Sigmoid colon (tissue), 7 donors: ENCODE measurements at regions of chr10 and their contacts with region 1.

Region 1: GRCh38 chr10:61284222-61284890 is 168.8 kb downstream of the TMEM26 start:
- DNase-seq: no peak
- H3K4me3 ChIP-seq: no peak overlapping the region
- H3K27ac ChIP-seq: peak overlapping the region in 2 of 4 donors; percentile 8 to 26
- H3K4me1 ChIP-seq: peaks cover 0 to 11% (median 3%) of the 10 kb centered on the region in 4 donors
- H3K27me3 ChIP-seq: no peaks in the 10 kb centered on the region
- CTCF ChIP-seq: peak; percentile 49 to 81 (median 65)
- EP300 ChIP-seq: no peak
- POLR2A ChIP-seq: no peak

Region 2: DNA sequence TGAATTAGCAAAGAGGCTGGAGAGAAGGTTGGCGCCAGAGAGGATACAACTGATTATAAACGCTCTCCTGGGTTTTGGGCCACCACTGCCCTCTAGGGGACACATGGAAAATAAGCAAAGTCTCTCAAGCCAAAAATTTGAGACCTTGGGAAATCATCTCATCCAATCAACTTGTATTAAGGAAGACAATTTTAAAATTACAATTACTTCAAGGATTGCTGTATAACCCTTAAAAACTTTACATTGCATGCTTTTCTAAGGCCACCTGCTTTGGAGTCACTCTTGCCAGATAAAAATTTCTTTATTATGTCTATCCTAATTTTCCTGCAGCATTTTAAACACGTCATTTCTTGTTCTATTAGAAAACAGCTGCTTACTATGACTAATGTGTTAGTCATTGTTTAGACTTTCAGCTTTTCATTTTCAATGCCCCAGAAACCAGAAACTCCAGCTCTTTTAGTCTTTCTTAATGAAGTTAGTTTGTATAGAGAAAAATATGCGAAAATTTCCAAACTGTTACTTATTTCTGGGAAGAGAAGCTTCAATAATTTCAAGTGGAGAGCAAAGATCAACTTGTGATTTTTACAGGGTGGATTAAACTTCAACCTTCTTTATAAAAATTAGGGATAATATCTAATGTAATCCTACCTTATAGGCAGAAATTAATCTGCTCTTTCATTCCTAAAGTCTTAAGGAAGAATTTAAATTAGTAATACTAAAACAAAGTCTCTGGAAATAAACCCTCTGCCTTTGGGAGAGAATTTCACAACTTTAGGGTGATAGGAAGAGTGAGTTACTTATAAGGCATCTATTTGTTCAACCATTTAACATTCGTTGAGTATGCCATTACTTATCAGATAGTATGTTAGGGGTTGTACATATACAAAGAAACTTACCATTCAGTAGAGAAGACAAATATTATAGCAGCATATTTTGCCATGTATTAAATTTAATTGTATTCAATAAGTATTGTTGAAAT is 319.8 kb before region 1 on chr10:
- intact Hi-C with region 1: loop called (anchors 10 kb)
- DNase-seq: peak; percentile 91
- H3K4me3 ChIP-seq: no peak overlapping the region
- H3K27ac ChIP-seq: peak overlapping the region; percentile 32 to 54 (median 49)
- H3K4me1 ChIP-seq: peaks cover 0 to 13% (median 3%) of the 10 kb centered on the region in 4 donors
- H3K27me3 ChIP-seq: no peaks in the 10 kb centered on the region
- CTCF ChIP-seq: peak; percentile 40 to 81 (median 64)
- EP300 ChIP-seq: no peak
- POLR2A ChIP-seq: no peak

Region 3: GRCh38 chr10:61140765-61141392 is 143.5 kb before region 1 on chr10:
- intact Hi-C with region 1: loop called (anchors 2 kb)
- DNase-seq: peak; percentile 67
- H3K4me3 ChIP-seq: no peak overlapping the region
- H3K27ac ChIP-seq: no peak overlapping the region
- H3K4me1 ChIP-seq: peaks cover 0 to 3% (median 0%) of the 10 kb centered on the region in 4 donors
- H3K27me3 ChIP-seq: no peaks in the 10 kb centered on the region
- CTCF ChIP-seq: peak; percentile 5 to 64 (median 38)
- EP300 ChIP-seq: no peak
- POLR2A ChIP-seq: no peak

Region 4: DNA sequence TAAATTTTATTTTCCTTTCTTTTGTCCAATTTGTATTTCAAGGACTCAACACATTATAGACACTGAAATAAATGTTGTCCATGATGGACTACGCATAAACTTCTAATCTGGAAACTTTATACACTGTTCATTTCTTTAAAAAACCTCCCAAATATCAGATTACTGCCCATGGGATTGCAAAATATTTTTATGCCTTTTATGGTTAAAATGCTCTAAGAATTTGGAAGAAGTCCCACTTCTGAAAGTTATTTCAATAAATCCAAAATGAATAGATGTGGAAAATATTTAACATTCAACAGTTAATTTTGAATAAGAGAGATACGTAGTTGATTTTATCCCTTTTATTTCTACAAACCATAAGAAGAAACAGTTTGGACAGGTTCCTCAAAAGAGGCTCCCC is 424.5 kb after region 1 on chr10:
- intact Hi-C with region 1: no loop called
- DNase-seq: no peak
- H3K4me3 ChIP-seq: no peak overlapping the region
- H3K27ac ChIP-seq: no peak overlapping the region
- H3K4me1 ChIP-seq: no peaks in the 10 kb centered on the region
- H3K27me3 ChIP-seq: no peaks in the 10 kb centered on the region
- CTCF ChIP-seq: no peak
- EP300 ChIP-seq: no peak
- POLR2A ChIP-seq: no peak

Region 5: GRCh38 chr10:61733358-61733940 is 449.1 kb after region 1 on chr10:
- intact Hi-C with region 1: loop called (anchors 10 kb)
- DNase-seq: no peak
- H3K4me3 ChIP-seq: no peak overlapping the region
- H3K27ac ChIP-seq: no peak overlapping the region
- H3K4me1 ChIP-seq: peaks cover 0 to 14% (median 9%) of the 10 kb centered on the region in 4 donors
- H3K27me3 ChIP-seq: no peaks in the 10 kb centered on the region
- CTCF ChIP-seq: peak in 2 of 4 experiments; percentile 27 to 47
- EP300 ChIP-seq: no peak
- POLR2A ChIP-seq: no peak

Region 6: GRCh38 chr10:62199584-62199983 is 915.2 kb after region 1 on chr10:
- intact Hi-C with region 1: no loop called
- DNase-seq: no peak
- H3K4me3 ChIP-seq: no peak overlapping the region
- H3K27ac ChIP-seq: no peak overlapping the region
- H3K4me1 ChIP-seq: no peaks in the 10 kb centered on the region
- H3K27me3 ChIP-seq: no peaks in the 10 kb centered on the region
- CTCF ChIP-seq: no peak
- EP300 ChIP-seq: no peak
- POLR2A ChIP-seq: no peak